CD8-positive, alpha-beta T cell (primary cell): ENCODE measurements at regions of chr12 and their contacts with region 1.

Region 1: GRCh38 chr12:108618079-108618952 is 15.4 kb downstream of the SELPLG start:
- DNase-seq: peak; percentile 53 to 87 (median 78)
- ATAC-seq: peak; percentile 35
- H3K4me3 ChIP-seq: no peak overlapping the region
- H3K4me3 Mint-ChIP-seq: no peak overlapping the region
- H3K27ac ChIP-seq: peak overlapping the region in 1 of 2 experiments; percentile 71
- H3K27ac Mint-ChIP-seq: peak overlapping the region; percentile 95
- H3K4me1 ChIP-seq: peaks cover 45% of the 10 kb centered on the region
- H3K4me1 Mint-ChIP-seq: peaks cover 61% of the 10 kb centered on the region
- H3K27me3 ChIP-seq: no peaks in the 10 kb centered on the region
- H3K27me3 Mint-ChIP-seq: no peaks in the 10 kb centered on the region
- CTCF ChIP-seq: peak; percentile 96

Region 2: DNA sequence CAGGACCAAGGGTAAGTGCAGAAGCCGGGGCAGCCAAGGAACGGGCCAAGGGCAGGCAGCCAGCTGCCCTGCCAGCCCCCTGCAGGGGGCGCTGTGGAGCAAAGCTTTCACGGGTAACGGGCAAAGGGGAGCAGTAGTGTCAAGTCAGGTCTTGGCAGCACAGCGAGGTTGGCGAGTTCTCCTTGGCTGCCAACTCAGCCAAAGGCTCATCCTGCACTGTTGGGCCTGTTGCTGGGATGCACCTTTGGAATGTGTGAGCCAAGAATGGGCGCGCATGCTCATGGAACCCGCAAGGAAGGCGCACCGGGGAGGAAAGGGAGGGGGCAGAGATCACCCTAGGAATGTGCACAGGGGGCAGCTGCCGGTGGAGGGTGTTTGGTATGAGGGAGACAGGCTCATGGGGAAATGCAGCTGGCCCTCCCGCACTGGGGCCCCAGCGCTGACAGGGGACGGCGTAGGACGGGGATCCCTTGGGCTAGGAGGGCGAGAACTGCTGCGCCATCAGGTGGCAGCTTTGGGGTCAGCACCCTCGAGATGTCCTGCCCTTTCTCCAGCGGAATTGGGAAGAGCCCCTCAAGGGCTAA is 705.8 kb before region 1 on chr12:
- CTCF ChIA-PET with region 1: no interaction called
- POLR2A ChIA-PET with region 1: no interaction called
- intact Hi-C with region 1: loop called in 1 of 2 experiments (anchors 10 kb)
- DNase-seq: peak; percentile 8 to 59 (median 54)
- ATAC-seq: peak; percentile 63
- H3K4me3 ChIP-seq: peak overlapping the region; percentile 19 to 45
- H3K4me3 Mint-ChIP-seq: peak overlapping the region; percentile 73
- H3K27ac ChIP-seq: no peak overlapping the region
- H3K27ac Mint-ChIP-seq: no peak overlapping the region
- H3K4me1 ChIP-seq: no peaks in the 10 kb centered on the region
- H3K4me1 Mint-ChIP-seq: peaks cover 7% of the 10 kb centered on the region
- H3K27me3 ChIP-seq: peaks cover 0 to 6% of the 10 kb centered on the region in 2 experiments
- H3K27me3 Mint-ChIP-seq: peaks cover 55% of the 10 kb centered on the region
- CTCF ChIP-seq: peak; percentile 45

Region 3: GRCh38 chr12:108583991-108584390 is 34.3 kb before region 1 on chr12:
- CTCF ChIA-PET with region 1: interaction called, 10 read pairs
- POLR2A ChIA-PET with region 1: no interaction called
- intact Hi-C with region 1: no loop called
- DNase-seq: no peak
- ATAC-seq: no peak
- H3K4me3 ChIP-seq: no peak overlapping the region
- H3K4me3 Mint-ChIP-seq: no peak overlapping the region
- H3K27ac ChIP-seq: no peak overlapping the region
- H3K27ac Mint-ChIP-seq: no peak overlapping the region
- H3K4me1 ChIP-seq: no peaks in the 10 kb centered on the region
- H3K4me1 Mint-ChIP-seq: no peaks in the 10 kb centered on the region
- H3K27me3 ChIP-seq: no peaks in the 10 kb centered on the region
- H3K27me3 Mint-ChIP-seq: no peaks in the 10 kb centered on the region
- CTCF ChIP-seq: no peak

Region 4: GRCh38 chr12:108640802-108641445 is 22.6 kb after region 1 on chr12:
- CTCF ChIA-PET with region 1: interaction called, 281 read pairs
- POLR2A ChIA-PET with region 1: interaction called, 15 read pairs
- intact Hi-C with region 1: loop called in 1 of 2 experiments (anchors 2 kb)
- DNase-seq: peak in 1 of 9 experiments; percentile 30
- ATAC-seq: no peak
- H3K4me3 ChIP-seq: no peak overlapping the region
- H3K4me3 Mint-ChIP-seq: no peak overlapping the region
- H3K27ac ChIP-seq: no peak overlapping the region
- H3K27ac Mint-ChIP-seq: no peak overlapping the region
- H3K4me1 ChIP-seq: peaks cover 37% of the 10 kb centered on the region
- H3K4me1 Mint-ChIP-seq: peaks cover 48% of the 10 kb centered on the region
- H3K27me3 ChIP-seq: no peaks in the 10 kb centered on the region
- H3K27me3 Mint-ChIP-seq: no peaks in the 10 kb centered on the region
- CTCF ChIP-seq: no peak

Region 5: GRCh38 chr12:108685469-108686260 is 67.3 kb after region 1 on chr12:
- CTCF ChIA-PET with region 1: interaction called, 12 read pairs
- POLR2A ChIA-PET with region 1: no interaction called
- intact Hi-C with region 1: no loop called
- DNase-seq: no peak
- ATAC-seq: no peak
- H3K4me3 ChIP-seq: no peak overlapping the region
- H3K4me3 Mint-ChIP-seq: no peak overlapping the region
- H3K27ac ChIP-seq: no peak overlapping the region
- H3K27ac Mint-ChIP-seq: no peak overlapping the region
- H3K4me1 ChIP-seq: peaks cover 18% of the 10 kb centered on the region
- H3K4me1 Mint-ChIP-seq: peaks cover 23% of the 10 kb centered on the region
- H3K27me3 ChIP-seq: no peaks in the 10 kb centered on the region
- H3K27me3 Mint-ChIP-seq: no peaks in the 10 kb centered on the region
- CTCF ChIP-seq: no peak

Region 6: GRCh38 chr12:109093022-109093918 is 475.0 kb after region 1 on chr12 and contains the start of gene ALKBH2:
- CTCF ChIA-PET with region 1: interaction called, 6 read pairs
- POLR2A ChIA-PET with region 1: no interaction called
- intact Hi-C with region 1: loop called in 1 of 2 experiments (anchors 5 kb)
- DNase-seq: peak; percentile 89 to 99 (median 95)
- ATAC-seq: peak; percentile 77
- H3K4me3 ChIP-seq: peak within 1 kb of the TSS; percentile 63 to 78
- H3K4me3 Mint-ChIP-seq: peak within 1 kb of the TSS; percentile 83
- H3K27ac ChIP-seq: peak within 1 kb of the TSS; percentile 65 to 69
- H3K27ac Mint-ChIP-seq: peak within 1 kb of the TSS; percentile 91
- H3K4me1 ChIP-seq: peaks cover 27% of the 10 kb centered on the region
- H3K4me1 Mint-ChIP-seq: peaks cover 40% of the 10 kb centered on the region
- H3K27me3 ChIP-seq: no peaks in the 10 kb centered on the region
- H3K27me3 Mint-ChIP-seq: no peaks in the 10 kb centered on the region
- CTCF ChIP-seq: peak; percentile 94
- total RNA-seq, gene ALKBH2: 9.8 to 12.8 TPM